ENCODE measurements at regions of chr19 and their contacts with region 1.

Region 1: DNA sequence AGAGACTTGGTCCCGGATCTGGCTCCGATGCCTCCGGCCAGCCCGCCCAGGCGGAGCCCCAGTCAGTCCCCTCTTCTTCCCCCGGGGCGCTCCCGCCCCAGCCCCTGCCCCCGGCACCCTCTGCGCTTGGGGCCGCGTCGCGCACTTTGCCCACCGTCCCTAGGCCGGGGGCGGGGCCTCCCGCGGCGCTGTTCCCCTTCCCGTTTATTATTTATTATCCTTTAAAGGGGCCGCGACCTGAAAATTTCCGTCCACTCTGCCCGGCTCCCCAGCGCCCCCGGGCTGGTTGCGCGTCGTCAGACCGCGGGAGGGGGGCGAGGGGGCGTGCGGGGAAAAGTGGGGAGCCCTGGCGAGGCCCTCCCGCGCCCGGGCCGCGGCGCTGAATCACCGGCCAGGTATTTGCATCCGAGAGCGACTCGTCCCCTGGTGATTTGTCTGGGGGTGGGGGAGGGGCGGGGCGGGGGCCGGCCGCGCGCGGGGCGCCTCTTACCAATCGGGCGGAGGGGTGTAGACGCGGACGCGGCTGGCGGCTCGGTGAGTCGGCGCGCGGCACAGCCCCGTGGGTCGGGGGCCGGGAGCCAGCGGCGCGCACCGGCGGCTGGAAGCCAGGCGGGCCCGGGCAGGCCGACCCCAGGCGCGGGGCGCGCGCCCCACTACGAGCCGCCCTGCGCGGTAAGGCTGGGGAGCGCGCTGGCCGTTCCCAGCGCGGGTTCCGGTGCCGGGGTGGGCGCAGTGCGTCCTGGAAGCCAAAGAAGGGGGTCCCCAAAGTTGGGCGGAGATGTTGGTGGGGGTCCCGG is at the start of gene ARID3A:
- DNase-seq: peak; percentile 76
- H3K4me3 Mint-ChIP-seq: peak within 1 kb of the TSS; percentile 73
- H3K27ac Mint-ChIP-seq: peak within 1 kb of the TSS; percentile 56
- H3K4me1 Mint-ChIP-seq: peaks cover 13% of the 10 kb centered on the region
- H3K27me3 Mint-ChIP-seq: no peaks in the 10 kb centered on the region
- total RNA-seq, gene ARID3A: 23.1 to 28.4 TPM

Region 2: DNA sequence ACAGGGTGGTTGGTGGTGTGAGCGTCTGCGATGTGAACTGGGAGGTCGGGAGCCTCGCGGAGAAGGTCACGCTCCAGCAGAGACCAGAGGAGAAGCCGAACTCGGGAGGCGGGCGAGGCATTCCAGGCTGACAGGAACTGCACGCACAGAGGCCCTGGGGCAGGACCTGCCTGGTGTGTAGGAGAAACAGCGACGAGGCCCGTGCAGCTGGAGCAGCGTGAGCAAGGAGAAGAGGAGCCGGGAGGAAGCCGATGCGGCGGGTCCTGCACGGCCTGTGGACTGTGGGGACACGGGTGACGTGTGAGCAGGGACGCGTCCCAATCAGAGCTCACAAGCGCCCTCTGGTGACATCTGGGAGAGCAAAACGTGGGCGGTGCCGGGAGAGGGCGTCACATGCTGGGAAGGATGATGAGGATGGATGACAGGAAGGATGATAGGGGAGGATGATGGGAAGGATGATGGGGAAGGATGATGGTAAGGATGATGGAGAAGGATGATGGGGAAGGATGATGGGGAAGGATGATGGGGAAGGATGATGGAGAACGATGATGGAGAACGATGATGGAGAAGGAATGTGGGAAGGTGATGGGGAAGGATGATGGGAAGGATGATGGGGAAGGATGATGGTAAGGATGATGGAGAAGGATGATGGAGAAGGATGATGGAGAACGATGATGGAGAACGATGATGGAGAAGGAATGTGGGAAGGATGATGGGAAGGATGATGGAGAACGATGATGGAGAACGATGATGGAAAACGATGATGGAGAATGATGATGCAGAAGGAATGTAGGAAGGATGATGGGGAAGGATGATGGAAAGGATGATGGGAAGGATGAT is 445.5 kb before region 1 on chr19:
- CTCF ChIA-PET with region 1: no interaction called
- intact Hi-C with region 1: no loop called
- DNase-seq: peak; percentile 65
- H3K4me3 Mint-ChIP-seq: peak overlapping the region; percentile 14
- H3K27ac Mint-ChIP-seq: peak overlapping the region; percentile 22
- H3K4me1 Mint-ChIP-seq: peaks cover 10% of the 10 kb centered on the region
- H3K27me3 Mint-ChIP-seq: peaks cover 14% of the 10 kb centered on the region

Region 3: GRCh38 chr19:771332-771785 is 154.4 kb before region 1 on chr19:
- CTCF ChIA-PET with region 1: interaction called, 4 read pairs
- intact Hi-C with region 1: loop called (anchors 1 kb)
- DNase-seq: peak; percentile 65
- H3K4me3 Mint-ChIP-seq: no peak overlapping the region
- H3K27ac Mint-ChIP-seq: no peak overlapping the region
- H3K4me1 Mint-ChIP-seq: peaks cover 3% of the 10 kb centered on the region
- H3K27me3 Mint-ChIP-seq: no peaks in the 10 kb centered on the region

Region 4: DNA sequence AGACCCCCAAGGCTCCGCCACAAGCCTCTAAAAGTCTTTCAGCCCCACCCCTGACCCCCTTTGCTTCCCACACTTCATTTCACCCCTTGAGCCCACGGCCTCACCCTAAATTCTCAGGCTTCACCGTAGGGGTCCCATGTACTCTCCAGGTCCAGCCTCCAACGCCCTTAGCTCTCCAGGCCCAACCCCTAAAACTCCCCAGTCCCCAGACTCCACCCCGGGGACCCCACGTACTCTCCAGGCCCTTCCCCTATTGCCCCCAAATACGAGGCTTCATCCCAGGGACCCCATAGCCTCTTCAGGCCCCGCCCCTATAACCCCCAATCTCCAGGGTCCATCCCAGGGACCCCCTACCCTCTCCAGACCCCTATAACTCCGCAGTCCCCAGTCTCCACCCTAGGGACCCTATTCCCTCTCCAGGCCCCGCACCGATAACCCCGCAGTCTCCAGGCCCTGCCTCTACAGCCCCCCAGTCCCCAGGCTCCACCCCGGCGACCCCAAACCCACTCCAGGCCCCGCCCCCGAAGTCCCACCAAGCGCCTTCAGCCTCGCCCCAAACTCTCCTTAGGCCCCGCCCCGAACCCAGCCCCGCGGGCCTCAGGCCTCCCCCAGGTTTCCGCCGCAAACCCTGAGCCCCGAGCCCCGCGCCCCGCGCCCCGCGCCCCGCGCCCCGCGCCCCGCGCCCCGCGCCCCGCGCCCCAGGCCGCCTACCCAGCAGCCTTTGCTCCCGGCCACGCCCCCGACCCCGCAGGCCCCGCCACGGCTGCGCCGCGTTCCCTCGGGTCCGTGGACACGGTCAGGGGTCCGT is 33.3 kb before region 1 on chr19:
- CTCF ChIA-PET with region 1: no interaction called
- intact Hi-C with region 1: no loop called
- DNase-seq: peak; percentile 37
- H3K4me3 Mint-ChIP-seq: peak overlapping the region; percentile 82
- H3K27ac Mint-ChIP-seq: peak overlapping the region; percentile 98
- H3K4me1 Mint-ChIP-seq: peaks cover 14% of the 10 kb centered on the region
- H3K27me3 Mint-ChIP-seq: no peaks in the 10 kb centered on the region

Region 5: DNA sequence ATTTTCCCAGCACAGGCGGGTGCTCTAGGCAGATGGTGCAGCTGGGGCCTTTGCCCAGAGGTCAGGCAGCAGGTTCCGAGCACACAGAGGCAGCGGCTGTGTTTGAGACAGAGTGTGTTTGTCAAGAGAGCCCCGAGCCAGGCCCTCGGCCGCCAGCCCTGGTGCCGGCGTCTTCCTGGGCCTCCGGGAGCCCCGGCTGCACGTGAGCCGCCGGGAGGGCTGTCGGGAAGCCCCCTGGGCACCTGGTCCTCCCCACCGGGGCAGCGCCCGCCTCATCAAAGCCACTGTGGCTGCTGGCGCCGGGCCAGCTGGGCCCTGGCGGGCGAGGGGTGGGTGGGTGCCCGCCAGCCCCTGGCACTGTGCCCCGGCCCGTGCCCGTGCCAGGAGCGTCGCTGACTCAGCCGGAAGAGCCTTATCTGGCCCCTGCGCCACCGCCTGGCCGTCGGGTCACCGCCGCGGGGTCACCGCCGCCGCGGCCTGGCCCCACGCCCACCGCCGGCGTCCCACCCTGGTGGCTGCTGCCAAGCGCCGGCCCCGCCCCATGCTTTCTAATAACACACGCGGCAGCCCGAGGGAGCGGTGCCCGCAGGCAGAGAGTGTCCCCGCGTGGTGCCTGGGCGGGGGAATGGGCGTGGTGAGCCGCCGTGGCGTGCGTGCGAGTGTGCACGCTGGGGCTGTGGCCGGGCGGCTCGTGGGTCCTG is 15.0 kb after region 1 on chr19:
- CTCF ChIA-PET with region 1: interaction called, 5 read pairs
- intact Hi-C with region 1: loop called (anchors 2 kb)
- DNase-seq: peak; percentile 52
- H3K4me3 Mint-ChIP-seq: peak overlapping the region; percentile 68
- H3K27ac Mint-ChIP-seq: no peak overlapping the region
- H3K4me1 Mint-ChIP-seq: peaks cover 28% of the 10 kb centered on the region
- H3K27me3 Mint-ChIP-seq: no peaks in the 10 kb centered on the region

Region 6: GRCh38 chr19:1001538-1002166 is 75.9 kb after region 1 on chr19:
- CTCF ChIA-PET with region 1: interaction called, 3 read pairs
- intact Hi-C with region 1: loop called (anchors 1 kb)
- DNase-seq: peak; percentile 73
- H3K4me3 Mint-ChIP-seq: no peak overlapping the region
- H3K27ac Mint-ChIP-seq: no peak overlapping the region
- H3K4me1 Mint-ChIP-seq: peaks cover 7% of the 10 kb centered on the region
- H3K27me3 Mint-ChIP-seq: peaks cover 29% of the 10 kb centered on the region

Region 7: DNA sequence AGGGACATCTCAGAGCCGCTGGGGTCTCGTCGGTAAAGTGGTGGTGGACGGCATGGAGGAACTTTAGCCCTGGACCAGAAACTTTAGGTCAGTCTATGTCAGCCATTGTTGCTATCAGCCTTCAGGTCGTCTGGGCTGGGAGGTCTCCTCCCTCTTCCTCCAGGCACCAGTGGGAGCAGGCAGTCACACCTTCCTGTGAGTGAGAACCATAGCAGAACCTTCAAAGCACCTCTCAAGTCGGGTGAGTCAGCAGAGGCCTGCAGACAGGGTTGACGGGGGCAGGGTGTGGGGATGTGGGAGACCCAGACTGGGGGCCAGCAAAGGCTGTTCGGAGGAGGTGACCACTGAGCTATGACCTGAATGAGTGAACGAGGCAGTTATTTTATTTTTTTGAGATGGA is 263.7 kb after region 1 on chr19:
- CTCF ChIA-PET with region 1: interaction called, 4 read pairs
- intact Hi-C with region 1: loop called (anchors 5 kb)
- DNase-seq: peak; percentile 87
- H3K4me3 Mint-ChIP-seq: no peak overlapping the region
- H3K27ac Mint-ChIP-seq: peak overlapping the region; percentile 63
- H3K4me1 Mint-ChIP-seq: peaks cover 30% of the 10 kb centered on the region
- H3K27me3 Mint-ChIP-seq: no peaks in the 10 kb centered on the region

Region 8: GRCh38 chr19:1279782-1280341 is 354.1 kb after region 1 on chr19:
- CTCF ChIA-PET with region 1: no interaction called
- intact Hi-C with region 1: no loop called
- DNase-seq: peak; percentile 85
- H3K4me3 Mint-ChIP-seq: no peak overlapping the region
- H3K27ac Mint-ChIP-seq: no peak overlapping the region
- H3K4me1 Mint-ChIP-seq: peaks cover 19% of the 10 kb centered on the region
- H3K27me3 Mint-ChIP-seq: peaks cover 7% of the 10 kb centered on the region

Measured in activated naive CD4-positive, alpha-beta T cell treated with anti-CD3 and anti-CD28 coated beads for 36 hours (primary cell).